ENCODE measurements at regions of chr6 and their contacts with region 1.

Region 1: GRCh38 chr6:34696739-34697543 is at the start of gene ILRUN:
- DNase-seq: peak; percentile 93 to 98 (median 97)
- ATAC-seq: peak; percentile 92
- H3K4me3 ChIP-seq: peak within 1 kb of the TSS; percentile 94 to 96
- H3K4me3 Mint-ChIP-seq: peak within 1 kb of the TSS; percentile 97
- H3K27ac ChIP-seq: peak within 1 kb of the TSS; percentile 93 to 98
- H3K27ac Mint-ChIP-seq: peak within 1 kb of the TSS; percentile 99
- H3K4me1 ChIP-seq: peaks cover 24% of the 10 kb centered on the region
- H3K4me1 Mint-ChIP-seq: peaks cover 43% of the 10 kb centered on the region
- H3K27me3 ChIP-seq: no peaks in the 10 kb centered on the region
- H3K27me3 Mint-ChIP-seq: no peaks in the 10 kb centered on the region
- CTCF ChIP-seq: no peak
- total RNA-seq, gene ILRUN: 54.8 to 58.8 TPM

Region 2: DNA sequence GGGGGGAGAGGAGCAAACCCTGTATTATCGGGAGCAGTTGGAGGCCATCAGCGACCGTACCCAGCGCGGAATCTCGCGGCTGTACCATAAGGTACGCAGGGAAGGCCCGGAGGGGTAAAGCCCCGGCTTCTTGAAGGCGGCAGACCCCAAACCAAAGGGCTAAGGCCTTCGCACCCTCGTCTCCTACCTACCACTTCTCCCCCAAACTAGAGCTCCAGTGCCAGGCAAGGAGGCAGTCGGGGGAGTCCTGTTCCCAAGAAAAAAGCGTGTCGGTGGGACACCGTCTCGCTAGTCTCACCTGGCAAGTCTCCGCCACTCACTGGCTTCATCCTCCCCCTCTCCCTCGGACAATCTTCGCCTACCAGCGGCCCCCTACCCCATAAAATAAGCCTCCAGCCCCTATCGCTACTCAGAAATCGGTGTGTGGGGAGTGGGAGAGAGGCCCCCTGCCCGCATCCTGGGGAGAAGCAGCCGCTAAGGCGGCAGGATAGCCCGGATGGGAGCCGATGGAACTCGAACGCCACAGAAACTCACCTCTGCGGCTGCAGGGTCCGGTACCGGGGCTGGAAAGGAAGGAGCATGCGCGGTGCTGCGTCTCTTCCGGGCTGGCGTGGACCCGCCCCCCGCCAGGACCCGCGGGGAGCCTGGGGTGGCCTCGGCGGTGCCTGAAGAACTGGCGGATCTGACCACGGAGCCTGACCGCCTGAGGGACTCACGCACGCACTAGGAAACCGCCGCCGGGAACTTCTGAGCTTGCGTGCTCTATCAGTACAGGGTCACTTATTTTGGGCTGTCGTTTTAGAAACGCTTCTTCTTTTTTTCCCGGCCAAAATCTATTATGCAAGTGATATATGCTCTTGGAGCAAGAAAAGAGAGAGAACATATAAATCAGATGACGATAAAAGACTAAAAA is 271.2 kb before region 1 on chr6 and contains the start of gene RPS10:
- CTCF ChIA-PET with region 1: no interaction called
- POLR2A ChIA-PET with region 1: no interaction called
- intact Hi-C with region 1: loop called in 1 of 2 experiments (anchors 2 kb)
- DNase-seq: peak; percentile 79 to 95 (median 89)
- ATAC-seq: peak; percentile 98
- H3K4me3 ChIP-seq: peak within 1 kb of the TSS; percentile 78 to 96
- H3K4me3 Mint-ChIP-seq: peak within 1 kb of the TSS; percentile 96
- H3K27ac ChIP-seq: peak within 1 kb of the TSS; percentile 90 to 95
- H3K27ac Mint-ChIP-seq: peak within 1 kb of the TSS; percentile 97
- H3K4me1 ChIP-seq: peaks cover 23% of the 10 kb centered on the region
- H3K4me1 Mint-ChIP-seq: peaks cover 36% of the 10 kb centered on the region
- H3K27me3 ChIP-seq: no peaks in the 10 kb centered on the region
- H3K27me3 Mint-ChIP-seq: no peaks in the 10 kb centered on the region
- CTCF ChIP-seq: no peak
- total RNA-seq, gene RPS10: 2,721 to 2,770 TPM

Region 3: DNA sequence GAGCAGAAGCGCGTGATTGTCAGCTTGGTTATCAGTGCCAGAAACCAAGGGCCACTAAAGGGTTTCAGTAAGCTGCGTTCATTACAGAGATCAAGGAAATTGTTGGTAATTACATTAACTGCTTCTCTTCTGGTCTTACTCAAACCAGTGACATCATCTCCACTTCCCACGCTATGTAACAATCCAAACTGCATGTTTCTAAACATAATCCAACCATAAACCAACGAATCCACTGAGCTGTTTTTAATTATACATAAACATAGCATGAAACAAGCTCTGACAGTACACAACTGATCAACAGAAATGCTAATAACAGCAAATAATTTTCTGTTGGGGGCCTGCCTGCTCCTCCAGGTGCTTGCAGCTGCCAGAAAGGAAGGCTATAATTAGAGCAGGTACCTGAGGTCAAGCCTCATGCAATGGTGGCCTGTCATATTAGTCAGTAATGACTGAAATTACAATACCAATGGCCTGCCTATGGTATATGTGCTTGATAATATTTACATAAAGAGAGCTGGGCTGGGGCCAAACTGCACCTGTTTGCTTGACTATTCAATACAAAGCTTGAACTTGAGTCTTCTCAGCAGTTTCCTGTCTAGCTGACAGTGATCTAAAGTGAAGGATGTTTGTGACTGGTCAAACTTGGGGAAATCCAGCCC is 40.4 kb before region 1 on chr6:
- CTCF ChIA-PET with region 1: no interaction called
- POLR2A ChIA-PET with region 1: interaction called, 7 read pairs
- intact Hi-C with region 1: loop called (anchors 5 kb)
- DNase-seq: peak in 3 of 9 experiments; percentile 38 to 57 (median 41)
- ATAC-seq: peak; percentile 56
- H3K4me3 ChIP-seq: peak overlapping the region; percentile 33 to 47
- H3K4me3 Mint-ChIP-seq: peak overlapping the region; percentile 82
- H3K27ac ChIP-seq: peak overlapping the region; percentile 29 to 84
- H3K27ac Mint-ChIP-seq: peak overlapping the region; percentile 89
- H3K4me1 ChIP-seq: peaks cover 26% of the 10 kb centered on the region
- H3K4me1 Mint-ChIP-seq: peaks cover 56% of the 10 kb centered on the region
- H3K27me3 ChIP-seq: no peaks in the 10 kb centered on the region
- H3K27me3 Mint-ChIP-seq: no peaks in the 10 kb centered on the region
- CTCF ChIP-seq: no peak

Region 4: GRCh38 chr6:34729631-34730470 is 32.9 kb after region 1 on chr6:
- CTCF ChIA-PET with region 1: no interaction called
- POLR2A ChIA-PET with region 1: no interaction called
- intact Hi-C with region 1: no loop called
- DNase-seq: no peak
- ATAC-seq: no peak
- H3K4me3 ChIP-seq: no peak overlapping the region
- H3K4me3 Mint-ChIP-seq: no peak overlapping the region
- H3K27ac ChIP-seq: no peak overlapping the region
- H3K27ac Mint-ChIP-seq: no peak overlapping the region
- H3K4me1 ChIP-seq: no peaks in the 10 kb centered on the region
- H3K4me1 Mint-ChIP-seq: no peaks in the 10 kb centered on the region
- H3K27me3 ChIP-seq: no peaks in the 10 kb centered on the region
- H3K27me3 Mint-ChIP-seq: no peaks in the 10 kb centered on the region
- CTCF ChIP-seq: no peak

Region 5: GRCh38 chr6:34757687-34758274 is 60.8 kb after region 1 on chr6:
- CTCF ChIA-PET with region 1: interaction called, 7 read pairs
- POLR2A ChIA-PET with region 1: interaction called, 8 read pairs
- intact Hi-C with region 1: loop called (anchors 1 kb)
- DNase-seq: no peak
- ATAC-seq: no peak
- H3K4me3 ChIP-seq: peak overlapping the region; percentile 71 to 79
- H3K4me3 Mint-ChIP-seq: no peak overlapping the region
- H3K27ac ChIP-seq: peak overlapping the region; percentile 86 to 92
- H3K27ac Mint-ChIP-seq: no peak overlapping the region
- H3K4me1 ChIP-seq: peaks cover 18% of the 10 kb centered on the region
- H3K4me1 Mint-ChIP-seq: peaks cover 20% of the 10 kb centered on the region
- H3K27me3 ChIP-seq: no peaks in the 10 kb centered on the region
- H3K27me3 Mint-ChIP-seq: no peaks in the 10 kb centered on the region
- CTCF ChIP-seq: no peak

Region 6: GRCh38 chr6:34771727-34772126 is 74.8 kb after region 1 on chr6:
- CTCF ChIA-PET with region 1: no interaction called
- POLR2A ChIA-PET with region 1: no interaction called
- intact Hi-C with region 1: no loop called
- DNase-seq: no peak
- ATAC-seq: no peak
- H3K4me3 ChIP-seq: no peak overlapping the region
- H3K4me3 Mint-ChIP-seq: no peak overlapping the region
- H3K27ac ChIP-seq: no peak overlapping the region
- H3K27ac Mint-ChIP-seq: no peak overlapping the region
- H3K4me1 ChIP-seq: no peaks in the 10 kb centered on the region
- H3K4me1 Mint-ChIP-seq: peaks cover 15% of the 10 kb centered on the region
- H3K27me3 ChIP-seq: no peaks in the 10 kb centered on the region
- H3K27me3 Mint-ChIP-seq: no peaks in the 10 kb centered on the region
- CTCF ChIP-seq: no peak